B cell (primary cell): ENCODE measurements at regions of chr16 and their contacts with region 1.

Region 1: DNA sequence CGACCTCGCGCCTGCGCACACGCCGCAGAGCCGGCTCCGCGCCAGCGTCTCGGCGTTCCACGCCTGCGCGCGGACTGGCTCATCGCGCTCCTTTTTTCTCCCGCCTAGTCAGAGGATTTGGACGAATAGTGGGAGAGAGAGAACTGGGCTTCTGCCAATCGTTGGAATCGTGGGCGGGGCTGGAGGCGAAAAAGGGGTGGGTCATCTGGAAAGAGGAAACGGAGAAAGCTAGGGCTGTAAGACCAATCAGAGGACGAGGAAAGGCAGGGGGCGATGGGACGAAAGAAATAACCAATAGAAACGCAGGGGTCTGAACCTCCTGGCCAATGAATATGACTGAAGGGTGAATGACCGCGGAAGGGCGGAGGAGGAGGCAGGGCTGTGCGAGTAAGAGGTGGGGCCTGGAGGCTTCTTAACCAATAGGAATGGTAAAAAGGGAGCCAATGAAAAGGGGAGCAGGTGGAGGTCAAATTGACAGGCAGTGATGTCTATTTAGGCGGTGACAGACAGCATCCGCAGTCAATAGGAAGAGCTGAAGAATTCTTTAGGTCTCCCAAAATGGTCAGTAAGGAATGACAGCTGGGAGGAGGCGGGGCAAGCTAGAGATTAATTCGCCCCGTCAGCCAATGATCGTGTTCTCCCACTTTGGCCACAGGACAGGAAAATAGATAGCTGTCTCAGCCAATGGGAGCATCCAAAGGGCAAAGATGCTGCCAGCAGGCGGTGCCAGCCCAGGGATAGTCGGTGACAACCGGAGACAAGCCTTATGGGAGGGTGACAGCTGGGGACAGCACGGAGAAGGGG is at the start of gene TBC1D10B:
- DNase-seq: peak; percentile 99
- ATAC-seq: peak; percentile 82
- H3K4me3 ChIP-seq: peak within 1 kb of the TSS; percentile 47 to 77 (median 70)
- H3K4me3 Mint-ChIP-seq: peak within 1 kb of the TSS; percentile 86
- H3K27ac ChIP-seq: peak within 1 kb of the TSS; percentile 60 to 71
- H3K27ac Mint-ChIP-seq: peak within 1 kb of the TSS; percentile 90
- H3K4me1 ChIP-seq: peaks cover 25 to 35% of the 10 kb centered on the region in 2 donors
- H3K4me1 Mint-ChIP-seq: peaks cover 49% of the 10 kb centered on the region
- H3K27me3 ChIP-seq: no peaks in the 10 kb centered on the region
- H3K27me3 Mint-ChIP-seq: no peaks in the 10 kb centered on the region
- CTCF ChIP-seq: peak; percentile 26
- total RNA-seq, gene TBC1D10B: 53.0 and 58.0 TPM in 2 replicates

Region 2: GRCh38 chr16:29883987-29884386 is 486.7 kb before region 1 on chr16:
- CTCF ChIA-PET with region 1: no interaction called
- POLR2A ChIA-PET with region 1: no interaction called
- intact Hi-C with region 1: no loop called
- DNase-seq: no peak
- ATAC-seq: no peak
- H3K4me3 ChIP-seq: no peak overlapping the region
- H3K4me3 Mint-ChIP-seq: no peak overlapping the region
- H3K27ac ChIP-seq: no peak overlapping the region
- H3K27ac Mint-ChIP-seq: no peak overlapping the region
- H3K4me1 ChIP-seq: no peaks in the 10 kb centered on the region
- H3K4me1 Mint-ChIP-seq: no peaks in the 10 kb centered on the region
- H3K27me3 ChIP-seq: peaks cover 0 to 13% (median 1%) of the 10 kb centered on the region in 4 experiments
- H3K27me3 Mint-ChIP-seq: peaks cover 28% of the 10 kb centered on the region
- CTCF ChIP-seq: no peak

Region 3: GRCh38 chr16:30065143-30065850 is 305.3 kb before region 1 on chr16 and contains the start of gene ALDOA:
- CTCF ChIA-PET with region 1: no interaction called
- POLR2A ChIA-PET with region 1: interaction called, 5 read pairs
- intact Hi-C with region 1: loop called (anchors 10 kb)
- DNase-seq: peak; percentile 97
- ATAC-seq: peak; percentile 83
- H3K4me3 ChIP-seq: peak within 1 kb of the TSS; percentile 73 to 96 (median 87)
- H3K4me3 Mint-ChIP-seq: peak within 1 kb of the TSS; percentile 100
- H3K27ac ChIP-seq: peak within 1 kb of the TSS; percentile 82 to 88
- H3K27ac Mint-ChIP-seq: peak within 1 kb of the TSS; percentile 99
- H3K4me1 ChIP-seq: peaks cover 16 to 42% of the 10 kb centered on the region in 2 donors
- H3K4me1 Mint-ChIP-seq: peaks cover 31% of the 10 kb centered on the region
- H3K27me3 ChIP-seq: no peaks in the 10 kb centered on the region
- H3K27me3 Mint-ChIP-seq: no peaks in the 10 kb centered on the region
- CTCF ChIP-seq: no peak
- total RNA-seq, gene ALDOA: 301 and 329 TPM in 2 replicates

Region 4: GRCh38 chr16:30355144-30355894 is 15.3 kb before region 1 on chr16 and contains the start of gene CD2BP2:
- CTCF ChIA-PET with region 1: interaction called, 7 read pairs
- POLR2A ChIA-PET with region 1: interaction called, 7 read pairs
- intact Hi-C with region 1: loop called (anchors 1 kb)
- DNase-seq: peak; percentile 95
- ATAC-seq: peak; percentile 88
- H3K4me3 ChIP-seq: peak within 1 kb of the TSS; percentile 82 to 99 (median 92)
- H3K4me3 Mint-ChIP-seq: peak within 1 kb of the TSS; percentile 92
- H3K27ac ChIP-seq: peak within 1 kb of the TSS; percentile 84 to 94
- H3K27ac Mint-ChIP-seq: peak within 1 kb of the TSS; percentile 95
- H3K4me1 ChIP-seq: peaks cover 20 to 34% of the 10 kb centered on the region in 2 donors
- H3K4me1 Mint-ChIP-seq: peaks cover 42% of the 10 kb centered on the region
- H3K27me3 ChIP-seq: no peaks in the 10 kb centered on the region
- H3K27me3 Mint-ChIP-seq: no peaks in the 10 kb centered on the region
- CTCF ChIP-seq: no peak
- total RNA-seq, gene CD2BP2: 80.1 and 82.0 TPM in 2 replicates

Region 5: GRCh38 chr16:30407102-30407803 is 36.6 kb after region 1 on chr16 and contains the start of gene ZNF771:
- CTCF ChIA-PET with region 1: interaction called, 37 read pairs
- POLR2A ChIA-PET with region 1: interaction called, 11 read pairs
- intact Hi-C with region 1: loop called (anchors 1 kb)
- DNase-seq: peak; percentile 94
- ATAC-seq: peak; percentile 91
- H3K4me3 ChIP-seq: peak within 1 kb of the TSS; percentile 42 to 76 (median 66)
- H3K4me3 Mint-ChIP-seq: peak within 1 kb of the TSS; percentile 98
- H3K27ac ChIP-seq: peak within 1 kb of the TSS; percentile 42 to 57
- H3K27ac Mint-ChIP-seq: peak within 1 kb of the TSS; percentile 96
- H3K4me1 ChIP-seq: peaks cover 15 to 23% of the 10 kb centered on the region in 2 donors
- H3K4me1 Mint-ChIP-seq: peaks cover 21% of the 10 kb centered on the region
- H3K27me3 ChIP-seq: no peaks in the 10 kb centered on the region
- H3K27me3 Mint-ChIP-seq: peaks cover 3% of the 10 kb centered on the region
- CTCF ChIP-seq: no peak
- total RNA-seq, gene ZNF771: 6.6 and 8.3 TPM in 2 replicates

Region 6: DNA sequence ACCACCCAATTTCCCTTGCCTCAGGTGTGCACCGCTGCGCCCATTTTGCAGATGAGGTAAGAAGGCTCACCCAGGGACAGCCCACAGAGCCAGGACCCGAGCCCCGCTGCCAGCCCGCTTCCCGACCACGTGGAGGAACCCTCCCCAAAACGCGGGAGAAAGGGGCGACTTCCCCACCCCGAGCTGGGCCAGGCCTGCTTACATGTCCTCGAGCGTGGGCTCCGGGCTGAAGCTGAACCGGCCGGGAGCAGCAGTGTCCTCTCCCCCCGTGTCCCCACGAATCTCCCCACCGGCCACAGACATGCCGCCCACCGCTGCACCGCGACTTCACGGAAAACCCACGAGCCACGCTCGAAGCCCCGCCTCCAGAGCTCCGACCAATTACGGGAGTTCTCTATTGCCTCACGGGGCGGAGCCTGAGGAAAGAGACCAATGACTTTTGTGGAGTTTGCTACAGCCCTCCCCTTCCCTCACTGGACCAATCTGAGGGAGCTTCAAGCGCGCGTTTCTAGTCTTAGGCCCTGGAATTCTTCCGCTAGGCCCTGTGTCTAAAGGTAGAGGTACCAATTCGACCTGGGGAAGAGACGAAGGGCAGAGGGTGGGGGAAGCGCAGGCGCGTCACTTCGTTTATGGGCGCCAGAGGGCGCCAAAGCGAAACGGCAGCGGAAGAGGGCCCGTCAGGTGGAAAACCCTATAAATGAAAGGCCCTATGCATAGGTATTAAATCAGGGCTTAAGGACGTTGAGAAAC is 59.2 kb after region 1 on chr16 and contains the start of gene DCTPP1:
- CTCF ChIA-PET with region 1: no interaction called
- POLR2A ChIA-PET with region 1: interaction called, 4 read pairs
- intact Hi-C with region 1: loop called (anchors 1 kb)
- DNase-seq: peak; percentile 99
- ATAC-seq: peak; percentile 97
- H3K4me3 ChIP-seq: peak within 1 kb of the TSS; percentile 78 to 98 (median 85)
- H3K4me3 Mint-ChIP-seq: no peak within 1 kb of the TSS
- H3K27ac ChIP-seq: peak within 1 kb of the TSS; percentile 79 to 86
- H3K27ac Mint-ChIP-seq: peak within 1 kb of the TSS; percentile 20
- H3K4me1 ChIP-seq: peaks cover 12 to 21% of the 10 kb centered on the region in 2 donors
- H3K4me1 Mint-ChIP-seq: peaks cover 17% of the 10 kb centered on the region
- H3K27me3 ChIP-seq: no peaks in the 10 kb centered on the region
- H3K27me3 Mint-ChIP-seq: no peaks in the 10 kb centered on the region
- CTCF ChIP-seq: peak; percentile 82
- total RNA-seq, gene DCTPP1: 25.0 and 28.9 TPM in 2 replicates

Region 7: DNA sequence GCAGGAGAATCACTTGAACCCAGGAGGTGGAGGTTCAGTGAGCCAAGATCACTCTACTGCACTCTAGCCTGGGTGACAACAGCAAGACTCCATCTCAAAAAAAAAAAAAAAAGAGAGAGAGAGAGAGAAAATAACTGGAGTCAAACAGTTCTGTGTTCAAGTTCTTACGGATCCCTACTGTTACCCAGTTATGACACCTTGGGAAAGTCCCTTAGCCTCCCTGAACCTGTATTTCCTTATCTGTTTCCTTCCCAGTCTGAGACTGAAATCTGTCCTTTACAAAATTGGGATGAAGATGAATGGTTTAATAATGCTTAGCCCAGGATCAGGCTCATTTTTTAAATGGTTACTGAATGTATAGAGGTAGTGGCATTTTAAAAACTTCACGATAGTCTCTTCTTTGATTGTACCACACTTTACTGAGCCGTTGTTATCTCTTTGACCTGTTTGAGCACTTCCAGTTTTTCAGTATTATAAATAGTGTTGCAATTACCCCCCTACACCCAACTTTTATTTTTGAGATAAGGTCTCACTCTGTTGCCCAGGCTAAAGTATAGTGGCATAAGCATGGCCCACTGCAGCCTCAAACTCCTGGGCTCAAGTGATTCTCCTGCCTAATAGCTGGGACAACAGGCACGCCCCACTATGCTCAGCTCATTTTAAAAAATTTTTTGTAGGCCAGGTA is 138.6 kb after region 1 on chr16:
- CTCF ChIA-PET with region 1: no interaction called
- POLR2A ChIA-PET with region 1: no interaction called
- intact Hi-C with region 1: no loop called
- DNase-seq: no peak
- ATAC-seq: no peak
- H3K4me3 ChIP-seq: no peak overlapping the region
- H3K4me3 Mint-ChIP-seq: no peak overlapping the region
- H3K27ac ChIP-seq: no peak overlapping the region
- H3K27ac Mint-ChIP-seq: no peak overlapping the region
- H3K4me1 ChIP-seq: no peaks in the 10 kb centered on the region
- H3K4me1 Mint-ChIP-seq: no peaks in the 10 kb centered on the region
- H3K27me3 ChIP-seq: no peaks in the 10 kb centered on the region
- H3K27me3 Mint-ChIP-seq: no peaks in the 10 kb centered on the region
- CTCF ChIP-seq: no peak